ENCODE measurements at regions of chr15 and their contacts with region 1.

Region 1: GRCh38 chr15:42084460-42085235 is 9.7 kb downstream of the PLA2G4D start:
- DNase-seq: no peak
- ATAC-seq: peak; percentile 96
- H3K4me3 ChIP-seq: no peak overlapping the region
- H3K27ac ChIP-seq: no peak overlapping the region
- H3K4me1 ChIP-seq: no peaks in the 10 kb centered on the region
- H3K27me3 ChIP-seq: no peaks in the 10 kb centered on the region; a peak in 1 of 4 replicates
- CTCF ChIP-seq: peak; percentile 89 to 94 (median 91)
- EP300 ChIP-seq: no peak
- POLR2A ChIP-seq: no peak
- RAD21 ChIP-seq: peak; percentile 72

Region 2: GRCh38 chr15:42065033-42065432 is 19.6 kb before region 1 on chr15:
- CTCF ChIA-PET with region 1: interaction called, 22 read pairs
- POLR2A ChIA-PET with region 1: no interaction called
- RAD21 ChIA-PET with region 1: no interaction called
- SMC1A ChIA-PET with region 1: interaction called, 4 read pairs
- in situ Hi-C with region 1: no loop called
- intact Hi-C with region 1: no loop called
- DNase-seq: no peak
- ATAC-seq: peak; percentile 47
- H3K4me3 ChIP-seq: no peak overlapping the region
- H3K27ac ChIP-seq: no peak overlapping the region
- H3K4me1 ChIP-seq: peaks cover 10% of the 10 kb centered on the region
- H3K27me3 ChIP-seq: no peaks in the 10 kb centered on the region
- CTCF ChIP-seq: no peak
- EP300 ChIP-seq: no peak
- POLR2A ChIP-seq: no peak
- RAD21 ChIP-seq: no peak

Region 3: DNA sequence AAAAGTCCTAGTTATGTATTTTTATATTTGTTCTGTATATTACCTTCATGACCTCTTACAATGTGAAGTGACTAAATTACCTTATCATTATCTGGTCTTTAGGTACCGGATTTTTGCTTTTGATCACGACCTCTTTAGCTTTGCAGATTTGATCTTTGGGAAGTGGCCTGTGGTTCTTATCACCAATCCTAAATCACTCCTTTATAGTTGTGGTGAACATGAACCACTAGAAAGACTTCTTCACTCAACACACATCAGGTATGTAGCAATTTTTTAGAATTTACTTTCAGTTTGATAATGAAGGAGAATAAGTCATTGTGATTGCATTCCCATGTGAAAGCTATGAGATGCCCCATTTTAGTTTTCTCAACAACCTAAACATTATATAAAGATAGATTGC is 1067.0 kb after region 1 on chr15:
- CTCF ChIA-PET with region 1: no interaction called
- POLR2A ChIA-PET with region 1: no interaction called
- RAD21 ChIA-PET with region 1: no interaction called
- SMC1A ChIA-PET with region 1: no interaction called
- in situ Hi-C with region 1: no loop called
- intact Hi-C with region 1: no loop called
- DNase-seq: no peak
- ATAC-seq: no peak
- H3K4me3 ChIP-seq: no peak overlapping the region
- H3K27ac ChIP-seq: no peak overlapping the region
- H3K4me1 ChIP-seq: no peaks in the 10 kb centered on the region
- H3K27me3 ChIP-seq: no peaks in the 10 kb centered on the region
- CTCF ChIP-seq: no peak
- EP300 ChIP-seq: no peak
- POLR2A ChIP-seq: no peak
- RAD21 ChIP-seq: no peak